Activated CD4-positive, alpha-beta memory T cell treated with anti-CD3 and anti-CD28 coated beads for 36 hours (primary cell): ENCODE measurements at regions of chr4 and their contacts with region 1.

Region 1: DNA sequence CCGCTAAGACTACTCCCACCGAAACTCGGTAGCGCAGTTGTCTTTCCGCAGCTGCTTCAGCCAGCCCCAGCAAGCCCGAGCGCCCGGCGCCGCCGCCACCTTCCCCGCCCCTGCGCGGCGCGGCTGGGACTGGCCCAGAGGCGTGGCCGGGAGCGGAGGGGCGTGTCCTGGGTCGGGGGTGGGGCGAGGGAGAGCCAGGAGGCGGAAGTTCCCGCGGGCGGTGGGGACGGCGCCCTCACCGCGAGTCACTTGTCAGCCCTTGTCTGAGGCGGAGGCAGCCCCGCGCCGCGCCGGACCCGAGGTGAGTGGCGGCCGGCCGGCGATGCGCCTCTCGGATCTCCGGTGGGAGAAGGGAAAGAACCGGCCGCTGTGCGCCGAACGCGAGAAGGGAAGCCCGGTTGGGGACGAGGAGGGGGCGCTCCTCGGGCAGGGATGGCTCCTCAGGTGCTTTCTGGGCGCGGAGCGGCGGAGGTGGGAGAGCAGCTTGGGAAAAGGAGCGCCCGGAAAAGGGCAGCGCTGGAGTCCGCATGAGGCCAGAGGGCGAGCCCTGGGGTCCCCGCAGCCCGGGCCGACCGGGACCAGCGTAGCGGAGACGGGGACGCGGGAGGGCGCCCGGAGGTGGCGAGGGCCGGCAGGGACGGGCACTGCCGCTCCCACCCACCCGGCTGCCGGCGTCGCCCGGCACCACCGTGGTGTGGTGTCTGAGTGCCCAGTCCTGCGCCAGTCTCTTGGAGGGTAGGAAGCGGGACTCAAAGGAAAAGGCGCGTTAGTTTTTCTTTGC is at the start of gene PDLIM5:
- DNase-seq: peak; percentile 91
- H3K4me3 Mint-ChIP-seq: peak within 1 kb of the TSS; percentile 81
- H3K27ac Mint-ChIP-seq: peak within 1 kb of the TSS; percentile 43
- H3K4me1 Mint-ChIP-seq: peaks cover 15% of the 10 kb centered on the region
- H3K27me3 Mint-ChIP-seq: peaks cover 13% of the 10 kb centered on the region
- total RNA-seq, gene PDLIM5: 23.8 to 26.3 TPM

Region 2: GRCh38 chr4:94207469-94208224 is 244.2 kb before region 1 on chr4 and contains the start of gene SMARCAD1:
- CTCF ChIA-PET with region 1: no interaction called
- POLR2A ChIA-PET with region 1: no interaction called
- intact Hi-C with region 1: loop called (anchors 1 kb)
- DNase-seq: peak; percentile 92
- H3K4me3 Mint-ChIP-seq: peak within 1 kb of the TSS; percentile 92
- H3K27ac Mint-ChIP-seq: peak within 1 kb of the TSS; percentile 99
- H3K4me1 Mint-ChIP-seq: peaks cover 33% of the 10 kb centered on the region
- H3K27me3 Mint-ChIP-seq: peaks cover 4% of the 10 kb centered on the region
- total RNA-seq, gene SMARCAD1: 26.5 to 28.0 TPM

Region 3: DNA sequence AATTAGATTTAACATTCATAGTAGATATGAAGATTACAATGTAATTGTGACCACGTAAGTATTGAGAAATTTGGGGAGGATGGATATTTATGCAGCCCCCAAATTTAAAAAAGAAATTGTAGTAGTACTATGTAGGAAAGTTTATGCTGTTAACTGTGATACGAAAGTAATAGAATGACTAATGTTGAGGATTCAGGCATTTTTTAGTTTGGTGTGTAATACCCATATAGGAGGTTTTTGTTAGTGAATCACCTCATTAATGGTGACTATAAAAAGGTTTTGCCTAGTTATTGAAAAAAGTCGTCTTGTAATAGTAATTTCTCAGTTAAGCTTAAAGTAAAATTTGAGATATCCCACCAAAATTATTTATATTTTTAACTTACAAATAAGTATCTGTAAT is 177.0 kb before region 1 on chr4:
- CTCF ChIA-PET with region 1: no interaction called
- POLR2A ChIA-PET with region 1: no interaction called
- intact Hi-C with region 1: no loop called
- DNase-seq: no peak
- H3K4me3 Mint-ChIP-seq: no peak overlapping the region
- H3K27ac Mint-ChIP-seq: no peak overlapping the region
- H3K4me1 Mint-ChIP-seq: no peaks in the 10 kb centered on the region
- H3K27me3 Mint-ChIP-seq: no peaks in the 10 kb centered on the region

Region 4: GRCh38 chr4:94338681-94339351 is 113.1 kb before region 1 on chr4:
- CTCF ChIA-PET with region 1: no interaction called
- POLR2A ChIA-PET with region 1: no interaction called
- intact Hi-C with region 1: loop called (anchors 2 kb)
- DNase-seq: no peak
- H3K4me3 Mint-ChIP-seq: peak overlapping the region; percentile 48
- H3K27ac Mint-ChIP-seq: peak overlapping the region; percentile 78
- H3K4me1 Mint-ChIP-seq: peaks cover 19% of the 10 kb centered on the region
- H3K27me3 Mint-ChIP-seq: no peaks in the 10 kb centered on the region

Region 5: DNA sequence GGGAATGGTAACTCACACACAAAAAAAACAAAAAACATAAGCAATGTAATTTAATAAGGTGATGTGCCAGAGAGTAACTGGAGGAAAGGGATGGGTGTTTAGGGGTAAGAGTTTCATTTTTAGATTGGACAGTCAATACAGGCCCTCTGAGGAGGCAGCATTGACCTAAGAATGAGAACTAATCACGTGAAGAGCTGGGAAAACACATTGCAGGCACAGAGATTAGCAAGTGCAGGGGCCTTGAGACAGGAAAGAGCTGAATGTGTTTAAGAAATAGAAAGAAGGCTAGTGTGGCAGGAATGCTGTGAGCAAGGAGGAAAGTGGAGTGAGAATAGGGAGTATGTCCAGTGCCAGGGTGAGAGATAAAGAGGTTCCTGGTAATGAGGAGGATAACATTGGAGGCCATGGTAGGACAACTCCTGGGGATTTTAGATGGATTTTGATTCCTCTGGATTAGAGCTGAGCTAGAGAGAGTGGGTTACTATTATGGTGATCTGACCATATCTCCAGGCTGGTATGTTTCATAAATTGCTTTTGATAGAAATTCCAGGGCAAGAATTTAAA is 17.4 kb after region 1 on chr4:
- CTCF ChIA-PET with region 1: no interaction called
- POLR2A ChIA-PET with region 1: no interaction called
- intact Hi-C with region 1: no loop called
- DNase-seq: no peak
- H3K4me3 Mint-ChIP-seq: no peak overlapping the region
- H3K27ac Mint-ChIP-seq: no peak overlapping the region
- H3K4me1 Mint-ChIP-seq: no peaks in the 10 kb centered on the region
- H3K27me3 Mint-ChIP-seq: no peaks in the 10 kb centered on the region

Region 6: GRCh38 chr4:94507708-94508107 is 55.8 kb after region 1 on chr4:
- CTCF ChIA-PET with region 1: no interaction called
- POLR2A ChIA-PET with region 1: no interaction called
- intact Hi-C with region 1: loop called (anchors 2 kb)
- DNase-seq: peak; percentile 11
- H3K4me3 Mint-ChIP-seq: no peak overlapping the region
- H3K27ac Mint-ChIP-seq: no peak overlapping the region
- H3K4me1 Mint-ChIP-seq: peaks cover 12% of the 10 kb centered on the region
- H3K27me3 Mint-ChIP-seq: no peaks in the 10 kb centered on the region

Region 7: GRCh38 chr4:94595879-94596483 is 144.1 kb after region 1 on chr4:
- CTCF ChIA-PET with region 1: no interaction called
- POLR2A ChIA-PET with region 1: no interaction called
- intact Hi-C with region 1: loop called (anchors 5 kb)
- DNase-seq: no peak
- H3K4me3 Mint-ChIP-seq: no peak overlapping the region
- H3K27ac Mint-ChIP-seq: no peak overlapping the region
- H3K4me1 Mint-ChIP-seq: no peaks in the 10 kb centered on the region
- H3K27me3 Mint-ChIP-seq: no peaks in the 10 kb centered on the region